ENCODE measurements at regions of chr19 and their contacts with region 1.

Region 1: GRCh38 chr19:40974633-40975037 is 16.4 kb upstream of the CYP2B6 start:
- H3K4me3 ChIP-seq: no peak overlapping the region
- H3K27ac ChIP-seq: no peak overlapping the region
- H3K4me1 ChIP-seq: no peaks in the 10 kb centered on the region
- CTCF ChIP-seq: peak; percentile 86

Region 2: GRCh38 chr19:40933034-40933433 is 41.6 kb before region 1 on chr19:
- CTCF ChIA-PET with region 1: interaction called, 13 read pairs
- POLR2A ChIA-PET with region 1: no interaction called
- H3K4me3 ChIP-seq: no peak overlapping the region
- H3K27ac ChIP-seq: no peak overlapping the region
- H3K4me1 ChIP-seq: 0 out of 2 replicates have a peak, but pooled peaks cover 3% of the 10 kb centered on the region
- CTCF ChIP-seq: peak; percentile 21; the same call in 1 of the 2 replicates

Region 3: DNA sequence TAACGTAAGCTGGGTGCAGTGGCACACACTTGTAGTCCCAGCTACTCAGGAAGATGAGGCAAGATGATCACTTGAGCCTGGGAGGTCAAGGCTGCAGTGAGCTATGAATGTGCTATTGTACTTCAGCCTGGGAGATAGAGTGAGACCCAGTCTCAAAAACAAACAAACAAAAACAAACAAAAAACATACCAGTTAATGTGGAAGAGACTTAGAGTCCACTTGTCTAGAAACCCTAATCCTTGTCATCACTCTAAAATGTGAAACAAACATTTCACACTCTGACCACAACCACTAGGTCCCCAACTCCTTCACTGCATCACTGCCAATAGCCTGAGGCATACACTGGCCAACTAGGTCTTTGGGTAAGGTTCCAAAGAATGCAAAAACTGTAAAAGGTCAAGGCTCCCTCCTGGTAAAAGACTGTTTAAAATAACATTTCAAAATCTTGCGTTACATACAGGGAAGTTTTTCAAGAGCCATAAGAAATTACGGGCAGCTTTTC is 12.1 kb before region 1 on chr19:
- CTCF ChIA-PET with region 1: interaction called, 24 read pairs
- POLR2A ChIA-PET with region 1: interaction called, 4 read pairs
- H3K4me3 ChIP-seq: no peak overlapping the region
- H3K27ac ChIP-seq: no peak overlapping the region
- H3K4me1 ChIP-seq: peaks cover 20% of the 10 kb centered on the region
- CTCF ChIP-seq: no peak

Region 4: DNA sequence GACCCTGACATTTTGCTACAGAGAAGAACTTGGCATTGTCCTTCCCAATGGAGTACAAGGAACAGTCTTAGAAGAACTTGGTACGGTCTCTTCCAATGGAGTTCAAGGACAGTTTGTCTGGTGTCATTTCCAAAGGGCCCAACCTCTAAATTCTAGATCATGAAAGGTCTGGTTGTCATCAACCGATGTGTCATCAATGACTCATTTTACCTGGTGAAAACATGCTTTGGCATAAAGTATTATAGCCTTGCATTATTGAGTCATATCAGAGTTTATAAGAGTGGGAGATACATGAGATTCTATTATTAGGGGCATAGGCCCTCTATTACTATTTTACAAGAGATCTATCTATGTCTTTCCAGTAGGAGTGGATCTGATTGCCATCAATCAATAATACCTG is 20.7 kb after region 1 on chr19:
- CTCF ChIA-PET with region 1: interaction called, 10 read pairs
- POLR2A ChIA-PET with region 1: no interaction called
- H3K4me3 ChIP-seq: no peak overlapping the region
- H3K27ac ChIP-seq: no peak overlapping the region
- H3K4me1 ChIP-seq: no peaks in the 10 kb centered on the region
- CTCF ChIP-seq: no peak

Region 5: DNA sequence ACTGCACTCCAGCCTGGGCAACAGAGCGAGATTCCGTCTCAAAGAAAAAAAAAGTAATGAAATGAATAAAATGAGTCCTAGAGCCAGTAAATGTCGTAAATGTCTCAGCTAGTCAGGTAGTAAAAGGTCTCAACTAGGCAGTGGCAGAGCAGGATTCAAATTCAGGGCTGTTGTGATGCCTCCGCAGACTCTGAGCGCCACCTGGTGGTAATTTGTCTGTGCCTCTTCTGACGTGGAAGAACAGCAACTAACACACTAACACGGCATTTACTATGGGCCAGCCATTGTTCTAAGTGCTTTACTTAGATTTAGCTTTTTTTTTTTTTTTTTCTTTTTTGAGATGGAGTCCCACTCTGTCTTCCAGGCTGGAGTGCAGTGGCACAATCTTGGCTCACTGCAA is 169.8 kb after region 1 on chr19:
- CTCF ChIA-PET with region 1: interaction called, 14 read pairs
- POLR2A ChIA-PET with region 1: interaction called, 4 read pairs
- H3K4me3 ChIP-seq: no peak overlapping the region
- H3K27ac ChIP-seq: no peak overlapping the region
- H3K4me1 ChIP-seq: no peaks in the 10 kb centered on the region
- CTCF ChIP-seq: peak; percentile 91

Measured in HEK293 (cell line).